Heart right ventricle (tissue), 16 donors: ENCODE measurements at regions of chr6 and their contacts with region 1.

Region 1: DNA sequence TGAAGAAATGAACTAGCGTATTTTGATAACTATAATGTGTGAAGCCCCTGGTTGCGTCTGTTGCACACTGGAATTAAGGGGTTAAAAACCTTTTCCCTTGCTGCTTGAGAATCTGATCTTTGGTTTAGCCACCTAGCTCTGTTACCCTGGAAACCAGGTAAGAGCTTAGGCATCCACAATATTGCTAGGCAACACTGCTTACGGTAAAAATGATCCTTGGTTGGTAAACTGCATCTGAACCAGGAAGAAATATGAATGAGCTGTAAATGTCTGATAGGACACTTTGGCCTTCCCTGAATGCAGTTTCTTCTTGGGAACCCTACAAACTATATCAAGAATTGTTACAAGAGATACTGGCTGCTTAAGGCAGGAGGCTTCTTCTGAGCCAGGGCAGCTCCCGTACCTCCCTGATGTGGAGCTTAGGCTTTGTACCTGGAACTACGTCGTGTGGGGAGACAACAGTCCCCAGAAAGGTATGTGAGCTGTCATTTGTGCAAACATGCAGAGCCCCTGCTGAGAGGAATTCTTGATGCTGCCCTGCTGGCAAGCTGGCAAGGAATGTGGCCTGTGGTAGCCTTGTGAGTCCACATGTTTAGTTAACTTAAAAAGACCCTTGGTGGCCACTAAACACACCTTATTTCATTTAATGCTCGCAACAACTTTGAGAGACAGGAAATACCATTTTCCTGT is 18.4 kb downstream of the UBE3D start:
- DNase-seq: no peak
- ATAC-seq: no peak
- H3K4me3 ChIP-seq: no peak overlapping the region
- H3K27ac ChIP-seq: no peak overlapping the region
- H3K4me1 ChIP-seq: no peaks in the 10 kb centered on the region
- H3K27me3 ChIP-seq: no peaks in the 10 kb centered on the region
- CTCF ChIP-seq: no peak

Region 2: DNA sequence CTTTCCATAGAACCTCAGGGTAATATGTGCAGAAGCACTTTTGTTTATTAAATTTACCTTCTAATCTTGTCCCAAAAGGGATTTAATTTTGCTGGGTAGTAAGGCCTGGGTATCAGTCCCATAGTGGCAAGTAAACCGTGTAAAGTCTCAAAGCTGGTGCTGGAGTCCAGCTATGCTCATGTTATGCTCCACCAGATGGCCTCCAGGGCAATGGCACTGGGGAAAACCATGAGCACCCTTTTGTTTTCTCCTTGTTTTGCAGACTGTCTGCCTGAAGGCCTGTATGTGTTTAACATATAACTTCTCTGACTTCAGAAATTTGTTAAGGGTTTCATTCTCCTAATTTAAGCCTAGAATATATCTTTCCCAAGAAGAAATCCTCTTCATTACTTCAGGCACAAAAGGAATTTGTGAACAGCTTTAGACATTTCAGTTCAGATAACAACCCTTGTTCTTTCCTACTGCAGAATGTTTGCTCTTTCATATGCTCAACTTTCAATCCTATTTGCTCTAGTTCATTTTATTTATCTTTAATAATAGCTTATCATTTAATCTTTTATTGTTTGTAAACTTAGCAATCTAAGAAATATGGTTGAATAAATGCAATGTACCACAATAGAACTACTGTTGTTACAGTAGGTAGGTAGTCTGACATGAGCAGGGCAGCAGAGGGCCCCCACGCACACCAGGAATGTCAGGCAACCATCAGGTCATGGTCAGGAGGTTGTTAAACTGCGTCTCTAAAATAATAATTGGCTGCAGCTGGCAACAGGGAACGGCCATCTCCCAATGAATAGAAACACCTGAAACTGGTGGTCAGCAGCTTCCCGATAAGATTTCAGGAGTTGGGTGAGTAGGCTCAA is 1457.5 kb before region 1 on chr6:
- intact Hi-C with region 1: no loop called
- DNase-seq: peak in 1 of 2 donors; percentile 12
- ATAC-seq: peak in 3 of 8 donors; percentile 56 to 65 (median 56)
- H3K4me3 ChIP-seq: no peak overlapping the region
- H3K27ac ChIP-seq: no peak overlapping the region
- H3K4me1 ChIP-seq: no peaks in the 10 kb centered on the region
- H3K27me3 ChIP-seq: no peaks in the 10 kb centered on the region
- CTCF ChIP-seq: peak in 3 of 9 donors; percentile 4 to 23 (median 16)

Region 3: DNA sequence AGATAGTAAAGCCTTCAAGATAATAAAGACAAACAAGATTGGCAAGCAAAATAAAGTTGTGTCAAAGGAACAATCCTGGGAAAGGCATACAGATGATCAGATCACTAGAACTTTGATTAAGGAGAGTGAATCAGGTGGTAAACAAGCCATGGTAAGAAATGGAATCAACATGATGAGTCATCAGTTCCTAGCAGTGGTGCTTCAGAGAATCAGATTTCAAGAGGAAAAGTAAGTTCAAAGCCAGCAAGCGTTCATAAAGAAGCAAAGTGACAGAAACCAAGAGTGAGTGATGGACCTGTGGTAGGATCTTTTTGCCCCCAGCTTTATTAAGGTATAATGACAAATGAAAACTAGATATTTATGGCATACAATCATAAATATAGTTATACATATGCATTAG is 343.2 kb before region 1 on chr6:
- intact Hi-C with region 1: no loop called
- DNase-seq: no peak
- ATAC-seq: no peak
- H3K4me3 ChIP-seq: no peak overlapping the region
- H3K27ac ChIP-seq: no peak overlapping the region
- H3K4me1 ChIP-seq: no peaks in the 10 kb centered on the region
- H3K27me3 ChIP-seq: no peaks in the 10 kb centered on the region
- CTCF ChIP-seq: no peak

Region 4: GRCh38 chr6:82906951-82907350 is 140.3 kb before region 1 on chr6:
- intact Hi-C with region 1: loop called in 1 of 10 experiments (anchors 10 kb)
- DNase-seq: no peak
- ATAC-seq: peak in 1 of 8 donors; percentile 48
- H3K4me3 ChIP-seq: no peak overlapping the region
- H3K27ac ChIP-seq: no peak overlapping the region
- H3K4me1 ChIP-seq: peaks cover 0 to 16% (median 9%) of the 10 kb centered on the region in 9 donors
- H3K27me3 ChIP-seq: no peaks in the 10 kb centered on the region
- CTCF ChIP-seq: no peak

Region 5: DNA sequence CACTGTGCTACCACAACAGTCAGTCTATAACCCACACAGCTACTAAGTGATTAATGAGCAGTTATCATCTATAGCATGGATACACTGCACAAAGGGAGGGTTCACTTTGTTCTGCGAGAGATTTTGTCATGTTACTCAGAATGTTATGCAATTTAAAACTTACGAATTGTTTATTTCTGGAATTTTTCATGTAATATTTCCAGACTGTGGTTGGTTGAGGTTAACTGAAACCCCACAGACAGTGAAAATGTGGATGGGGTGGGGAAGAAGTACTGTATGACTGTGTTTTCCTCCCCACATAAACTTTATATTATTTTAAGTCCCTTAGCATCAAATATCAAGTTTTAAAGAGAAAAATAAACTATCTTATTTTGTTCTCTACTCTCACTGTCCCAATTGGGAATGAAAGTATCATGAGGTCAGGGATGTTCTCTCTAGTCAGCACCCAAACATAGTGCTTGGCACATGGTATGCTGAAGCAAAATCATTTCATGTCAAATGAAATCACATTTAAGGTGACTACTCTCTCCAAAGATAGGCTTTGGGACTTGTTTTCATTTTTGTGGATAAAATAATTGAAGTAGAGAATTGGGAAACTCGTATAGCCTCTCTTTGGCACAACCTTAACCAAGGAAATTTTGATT is 45.7 kb after region 1 on chr6:
- intact Hi-C with region 1: no loop called
- DNase-seq: no peak
- ATAC-seq: peak in 1 of 8 donors; percentile 31
- H3K4me3 ChIP-seq: no peak overlapping the region
- H3K27ac ChIP-seq: no peak overlapping the region
- H3K4me1 ChIP-seq: peaks cover 0 to 19% (median 6%) of the 10 kb centered on the region in 9 donors
- H3K27me3 ChIP-seq: no peaks in the 10 kb centered on the region
- CTCF ChIP-seq: no peak